Naive thymus-derived CD8-positive, alpha-beta T cell (primary cell): ENCODE measurements at regions of chr19 and their contacts with region 1.

Region 1: DNA sequence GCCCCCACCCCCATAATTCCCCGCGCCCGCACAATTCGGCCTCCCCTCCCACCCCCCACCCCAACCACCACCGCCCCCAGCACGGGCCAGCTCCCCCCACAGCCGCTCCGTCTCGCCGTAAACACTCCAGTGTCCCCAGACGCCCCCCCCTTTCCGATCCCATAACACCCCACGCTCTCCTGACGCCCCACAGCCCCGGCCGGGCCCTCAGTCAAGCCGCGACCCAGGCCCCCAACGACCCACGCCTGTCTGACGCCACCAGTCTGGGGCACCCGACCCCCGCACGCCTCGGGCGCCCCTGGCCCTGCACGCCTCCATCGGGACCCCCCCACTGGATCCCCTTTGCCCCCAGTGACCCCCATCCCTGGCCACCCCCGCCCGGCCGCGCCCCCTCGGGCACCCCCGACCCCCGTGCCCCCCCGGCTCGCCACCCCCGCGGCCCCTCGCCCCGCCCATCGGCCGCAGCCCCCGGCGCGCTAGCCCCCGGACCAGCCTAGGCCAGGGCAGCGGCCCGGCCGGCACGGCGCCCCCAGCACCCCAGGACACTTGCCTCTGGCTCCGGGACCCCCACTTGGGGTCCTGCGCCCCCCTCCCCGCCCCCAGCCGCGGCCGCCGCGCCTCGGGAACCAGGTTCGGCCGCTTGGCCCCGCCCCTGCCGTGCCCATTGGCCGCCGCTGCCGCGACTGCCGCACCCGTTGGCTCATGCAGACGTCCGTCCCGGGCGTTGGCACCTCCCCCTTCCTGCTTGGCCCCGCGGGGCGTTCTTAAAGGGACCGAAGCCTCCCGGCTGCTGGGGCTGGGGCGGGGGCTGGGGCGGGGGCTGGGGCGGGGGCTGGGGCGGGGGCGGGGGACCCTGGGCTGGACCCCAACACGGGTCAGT is at the start of gene FKBP8:
- DNase-seq: peak; percentile 85 to 96 (median 91)
- ATAC-seq: peak; percentile 98
- H3K4me3 Mint-ChIP-seq: peak within 1 kb of the TSS; percentile 86 to 94 (median 92)
- H3K27ac Mint-ChIP-seq: peak within 1 kb of the TSS; percentile 90 to 98 (median 95)
- H3K4me1 Mint-ChIP-seq: peaks cover 7 to 36% (median 30%) of the 10 kb centered on the region in 4 donors
- H3K27me3 Mint-ChIP-seq: no peaks in the 10 kb centered on the region
- polyA plus RNA-seq, gene FKBP8: 87.0 to 125 (median 106) TPM

Region 2: GRCh38 chr19:18514800-18515651 is 28.1 kb before region 1 on chr19:
- POLR2A ChIA-PET with region 1: no interaction called
- DNase-seq: no peak
- ATAC-seq: no peak
- H3K4me3 Mint-ChIP-seq: peak overlapping the region in 3 of 10 donors; percentile 15 to 20 (median 19)
- H3K27ac Mint-ChIP-seq: peak overlapping the region in 8 of 10 donors; percentile 34 to 74 (median 41)
- H3K4me1 Mint-ChIP-seq: peaks cover 14 to 72% (median 56%) of the 10 kb centered on the region in 4 donors
- H3K27me3 Mint-ChIP-seq: no peaks in the 10 kb centered on the region

Region 3: GRCh38 chr19:18557474-18558201 is 14.5 kb after region 1 on chr19 and contains the start of gene KXD1:
- POLR2A ChIA-PET with region 1: interaction called, 29 read pairs
- DNase-seq: peak; percentile 90 to 99 (median 98)
- ATAC-seq: peak; percentile 98 to 99
- H3K4me3 Mint-ChIP-seq: peak within 1 kb of the TSS; percentile 80 to 94 (median 90)
- H3K27ac Mint-ChIP-seq: peak within 1 kb of the TSS; percentile 89 to 99 (median 95)
- H3K4me1 Mint-ChIP-seq: peaks cover 11 to 30% (median 21%) of the 10 kb centered on the region in 4 donors
- H3K27me3 Mint-ChIP-seq: no peaks in the 10 kb centered on the region
- polyA plus RNA-seq, gene KXD1: 68.3 to 80.2 (median 79.4) TPM